Activated CD4-positive, alpha-beta memory T cell treated with anti-CD3 and anti-CD28 coated beads, Interleukin-2, amount 10 ng/mL, durations not matched to agents 7 days and 5 days (primary cell): ENCODE measurements at regions of chr1 and their contacts with region 1.

Region 1: GRCh38 chr1:31394628-31395193 is 18.3 kb upstream of the SERINC2 start:
- DNase-seq: peak; percentile 82
- H3K4me3 Mint-ChIP-seq: peak overlapping the region; percentile 73
- H3K27ac Mint-ChIP-seq: no peak overlapping the region
- H3K4me1 Mint-ChIP-seq: peaks cover 12% of the 10 kb centered on the region
- H3K27me3 Mint-ChIP-seq: peaks cover 3% of the 10 kb centered on the region

Region 2: GRCh38 chr1:31196685-31197084 is 198.0 kb before region 1 on chr1:
- CTCF ChIA-PET with region 1: no interaction called
- POLR2A ChIA-PET with region 1: no interaction called
- DNase-seq: no peak
- H3K4me3 Mint-ChIP-seq: no peak overlapping the region
- H3K27ac Mint-ChIP-seq: no peak overlapping the region
- H3K4me1 Mint-ChIP-seq: no peaks in the 10 kb centered on the region
- H3K27me3 Mint-ChIP-seq: peaks cover 4% of the 10 kb centered on the region

Region 3: DNA sequence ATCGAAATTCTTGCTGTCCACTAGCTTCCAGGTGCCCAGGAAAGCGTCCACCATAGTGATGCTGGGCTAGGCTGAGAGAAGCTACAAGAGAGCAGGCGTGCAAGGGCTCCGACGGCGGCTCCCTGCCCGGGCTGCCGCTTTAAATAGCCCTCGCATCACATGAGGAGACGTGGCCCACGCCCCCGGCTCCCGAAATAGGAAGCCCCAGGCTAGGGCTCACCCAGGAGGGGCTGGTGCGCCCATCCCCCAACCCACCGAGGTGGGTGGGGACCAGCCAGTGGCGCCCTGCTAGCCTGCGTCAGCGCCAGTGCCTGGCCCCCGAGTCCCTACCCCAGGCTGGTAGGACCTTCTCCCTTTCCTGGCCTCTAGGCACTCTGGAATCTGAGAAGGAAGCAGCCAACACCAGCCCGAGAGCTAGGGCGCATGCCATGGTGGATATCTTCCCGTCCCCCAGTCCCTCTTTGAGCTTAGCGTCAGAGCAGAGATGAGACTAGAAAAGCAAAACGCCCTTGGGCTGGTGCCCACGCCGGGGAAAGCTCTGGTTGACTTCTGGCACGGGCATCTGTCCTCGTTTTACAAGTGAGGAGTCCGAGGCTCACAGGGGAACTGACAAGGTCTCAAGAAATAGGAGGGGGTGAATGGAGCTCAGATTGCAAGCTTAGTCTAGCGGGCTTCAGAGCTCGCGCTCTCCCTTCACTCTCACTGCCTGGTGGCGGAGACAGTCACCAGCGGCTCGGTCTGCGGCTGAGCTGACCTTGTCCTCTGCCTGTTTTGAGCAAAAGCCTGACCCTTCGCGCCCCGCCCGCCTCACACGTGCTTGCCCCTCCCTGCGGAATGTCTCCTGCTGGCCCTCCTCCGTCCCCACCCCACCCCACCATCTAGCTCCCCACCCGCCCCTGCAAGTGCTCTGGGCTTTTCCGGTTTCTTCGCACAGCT is 21.5 kb before region 1 on chr1 and contains the start of gene FABP3:
- CTCF ChIA-PET with region 1: interaction called, 10 read pairs
- POLR2A ChIA-PET with region 1: no interaction called
- DNase-seq: no peak
- H3K4me3 Mint-ChIP-seq: peak within 1 kb of the TSS; percentile 42
- H3K27ac Mint-ChIP-seq: no peak within 1 kb of the TSS
- H3K4me1 Mint-ChIP-seq: peaks cover 17% of the 10 kb centered on the region
- H3K27me3 Mint-ChIP-seq: peaks cover 11% of the 10 kb centered on the region
- total RNA-seq, gene FABP3: not detected

Region 4: DNA sequence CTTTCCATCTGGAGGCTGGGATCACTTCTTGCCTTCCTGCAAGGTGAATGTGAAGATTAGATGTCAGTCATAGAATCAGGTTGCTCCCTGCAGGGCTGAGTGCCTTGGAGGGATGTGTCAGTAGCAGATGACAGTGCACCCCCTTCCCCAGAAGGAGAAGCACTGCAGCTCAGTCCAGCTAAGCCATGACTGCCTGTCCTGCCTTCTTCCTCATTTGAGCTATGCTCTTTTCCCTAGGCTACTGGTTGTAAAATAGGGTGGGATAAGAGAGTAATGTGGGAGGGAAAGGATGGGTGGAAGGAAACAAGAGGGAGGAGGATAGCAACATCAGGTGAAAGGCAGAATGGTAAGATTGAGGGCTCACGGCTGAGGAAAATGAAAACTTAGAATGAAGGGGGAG is 10.7 kb before region 1 on chr1:
- CTCF ChIA-PET with region 1: interaction called, 12 read pairs
- POLR2A ChIA-PET with region 1: interaction called, 3 read pairs
- DNase-seq: no peak
- H3K4me3 Mint-ChIP-seq: no peak overlapping the region
- H3K27ac Mint-ChIP-seq: no peak overlapping the region
- H3K4me1 Mint-ChIP-seq: no peaks in the 10 kb centered on the region
- H3K27me3 Mint-ChIP-seq: peaks cover 14% of the 10 kb centered on the region

Region 5: GRCh38 chr1:31422505-31423319 is 28.0 kb after region 1 on chr1:
- CTCF ChIA-PET with region 1: interaction called, 27 read pairs
- POLR2A ChIA-PET with region 1: interaction called, 3 read pairs
- DNase-seq: peak; percentile 71
- H3K4me3 Mint-ChIP-seq: no peak overlapping the region
- H3K27ac Mint-ChIP-seq: no peak overlapping the region
- H3K4me1 Mint-ChIP-seq: peaks cover 9% of the 10 kb centered on the region
- H3K27me3 Mint-ChIP-seq: peaks cover 22% of the 10 kb centered on the region

Region 6: GRCh38 chr1:31548907-31549808 is 154.4 kb after region 1 on chr1:
- CTCF ChIA-PET with region 1: interaction called, 42 read pairs
- POLR2A ChIA-PET with region 1: interaction called, 3 read pairs
- DNase-seq: peak; percentile 91
- H3K4me3 Mint-ChIP-seq: peak overlapping the region; percentile 42
- H3K27ac Mint-ChIP-seq: no peak overlapping the region
- H3K4me1 Mint-ChIP-seq: peaks cover 13% of the 10 kb centered on the region
- H3K27me3 Mint-ChIP-seq: peaks cover 10% of the 10 kb centered on the region